MCF 10A (cell line): ENCODE measurements at regions of chr15 and their contacts with region 1.

Region 1: DNA sequence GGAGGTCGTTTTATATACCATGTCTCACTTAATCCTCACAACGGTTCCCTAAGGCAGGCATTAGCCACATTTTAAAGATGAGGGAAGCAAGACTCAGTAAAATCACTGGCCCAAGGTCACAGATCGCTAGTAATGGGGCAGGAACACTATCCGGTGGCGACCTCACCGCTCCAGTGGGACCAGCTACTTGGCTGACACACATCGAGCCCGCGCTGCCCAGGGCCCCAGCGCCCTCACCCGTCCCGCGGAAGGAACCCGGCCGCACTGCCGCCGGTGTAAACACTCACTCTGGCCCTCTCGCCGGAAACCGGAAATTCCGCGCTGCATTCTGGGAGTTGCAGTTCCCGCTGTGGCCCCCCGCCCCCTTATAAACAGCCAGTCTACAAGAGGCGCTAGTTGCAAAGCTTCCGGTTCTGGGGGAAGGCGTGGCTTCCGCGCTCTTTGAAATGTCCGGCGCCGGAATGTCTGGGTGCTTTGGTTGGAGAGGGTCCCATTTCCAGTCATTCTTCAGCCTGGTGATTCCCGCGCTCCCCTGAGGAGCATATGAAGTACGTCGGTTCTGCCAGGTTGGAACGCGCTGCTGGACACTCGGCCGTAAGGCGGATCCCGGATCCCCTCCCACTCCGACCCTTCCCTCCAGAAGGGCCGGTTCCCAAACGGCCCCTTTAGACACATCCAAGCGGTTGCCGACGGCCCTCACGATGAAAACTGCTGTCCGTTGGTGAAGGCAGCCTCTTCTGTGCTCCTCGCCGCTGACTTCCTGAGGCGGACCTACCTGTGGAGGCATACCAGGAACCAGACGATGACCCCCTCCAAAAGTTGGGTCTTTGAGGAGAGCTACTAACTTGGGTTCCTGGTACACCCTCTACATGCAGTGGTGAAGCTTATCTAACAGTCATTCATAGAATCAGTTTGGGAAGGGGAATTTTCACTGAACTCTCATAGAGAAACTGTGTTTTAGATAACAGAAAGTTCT is at the start of gene UBL7:
- DNase-seq: peak; percentile 97
- H3K4me3 Mint-ChIP-seq: peak within 1 kb of the TSS; percentile 93
- H3K27ac Mint-ChIP-seq: peak within 1 kb of the TSS; percentile 70
- H3K4me1 Mint-ChIP-seq: peaks cover 30% of the 10 kb centered on the region
- H3K27me3 Mint-ChIP-seq: no peaks in the 10 kb centered on the region
- CTCF ChIP-seq: no peak
- total RNA-seq, gene UBL7: 55.5 and 56.4 TPM in 2 replicates

Region 2: DNA sequence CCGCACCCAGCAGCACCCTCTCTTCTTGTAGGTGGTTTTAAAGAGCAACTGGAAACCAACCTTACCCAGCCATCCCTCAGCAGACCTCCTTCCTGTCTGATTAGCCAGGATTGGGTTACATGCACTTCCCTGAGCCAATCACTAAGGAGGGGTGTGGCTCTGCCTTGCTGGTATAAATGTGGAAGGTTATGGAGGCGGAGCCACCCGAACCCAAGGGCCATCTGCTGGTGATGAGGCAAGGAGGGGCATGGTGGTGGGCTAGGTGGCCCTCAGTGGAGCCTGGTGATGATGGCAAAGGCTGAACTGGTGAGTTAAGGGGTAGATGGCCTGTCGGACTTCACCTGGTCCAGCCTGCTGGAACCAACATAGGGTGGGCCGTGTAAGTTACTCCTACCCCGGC is 185.2 kb before region 1 on chr15:
- CTCF ChIA-PET with region 1: no interaction called
- POLR2A ChIA-PET with region 1: no interaction called
- intact Hi-C with region 1: no loop called
- DNase-seq: peak; percentile 22
- H3K4me3 Mint-ChIP-seq: no peak overlapping the region
- H3K27ac Mint-ChIP-seq: no peak overlapping the region
- H3K4me1 Mint-ChIP-seq: peaks cover 5% of the 10 kb centered on the region
- H3K27me3 Mint-ChIP-seq: peaks cover 37% of the 10 kb centered on the region
- CTCF ChIP-seq: no peak

Region 3: DNA sequence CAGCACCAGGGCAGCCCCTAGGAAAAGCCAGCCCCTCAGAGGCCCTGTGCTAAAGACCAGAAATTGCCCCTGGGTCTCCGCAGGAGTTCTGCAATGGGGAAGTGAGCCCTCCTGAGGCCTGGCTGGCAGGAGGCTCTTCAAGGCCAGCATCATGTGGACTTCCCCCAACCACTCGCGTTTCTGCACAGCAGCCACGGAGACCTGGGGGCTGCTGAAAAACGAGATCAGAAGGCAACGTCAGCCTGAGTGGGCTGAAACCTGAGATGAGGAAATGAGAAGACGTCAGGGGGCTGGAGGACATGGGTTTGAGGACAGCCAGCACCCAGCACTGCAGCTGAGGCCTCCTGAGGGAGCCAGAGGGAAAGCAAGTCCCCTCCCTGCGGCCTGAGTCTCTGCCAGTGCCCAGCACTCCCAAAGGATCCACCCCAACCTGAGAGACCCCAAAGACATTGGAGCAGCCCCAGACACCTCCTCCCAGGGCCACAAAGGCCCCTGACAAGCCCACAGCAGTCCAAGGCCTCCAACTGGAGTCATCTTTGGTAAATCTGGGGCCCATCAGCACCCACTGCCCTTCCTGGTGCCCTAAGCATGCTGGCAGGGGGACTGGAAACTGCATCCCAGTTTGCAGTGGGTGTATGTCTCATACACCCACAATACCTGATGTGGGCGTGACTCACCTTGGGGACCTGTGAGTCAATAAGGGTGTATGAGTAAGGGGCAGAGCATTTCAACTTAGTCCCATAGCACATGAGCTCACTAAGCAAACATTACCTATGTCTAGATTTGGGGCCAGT is 64.5 kb before region 1 on chr15:
- CTCF ChIA-PET with region 1: no interaction called
- POLR2A ChIA-PET with region 1: no interaction called
- intact Hi-C with region 1: no loop called
- DNase-seq: peak; percentile 85
- H3K4me3 Mint-ChIP-seq: no peak overlapping the region
- H3K27ac Mint-ChIP-seq: no peak overlapping the region
- H3K4me1 Mint-ChIP-seq: peaks cover 38% of the 10 kb centered on the region
- H3K27me3 Mint-ChIP-seq: no peaks in the 10 kb centered on the region
- CTCF ChIP-seq: no peak

Region 4: GRCh38 chr15:74540761-74541493 is 79.8 kb after region 1 on chr15 and contains the start of gene ARID3B:
- CTCF ChIA-PET with region 1: interaction called, 5 read pairs
- POLR2A ChIA-PET with region 1: interaction called, 32 read pairs
- intact Hi-C with region 1: loop called (anchors 2 kb)
- DNase-seq: peak; percentile 97
- H3K4me3 Mint-ChIP-seq: peak within 1 kb of the TSS; percentile 86
- H3K27ac Mint-ChIP-seq: peak within 1 kb of the TSS; percentile 86
- H3K4me1 Mint-ChIP-seq: peaks cover 40% of the 10 kb centered on the region
- H3K27me3 Mint-ChIP-seq: peaks cover 24% of the 10 kb centered on the region
- CTCF ChIP-seq: no peak
- total RNA-seq, gene ARID3B: 4.7 and 6.2 TPM in 2 replicates